IMR-90 (cell line): ENCODE measurements at regions of chr9 and their contacts with region 1.

Region 1: DNA sequence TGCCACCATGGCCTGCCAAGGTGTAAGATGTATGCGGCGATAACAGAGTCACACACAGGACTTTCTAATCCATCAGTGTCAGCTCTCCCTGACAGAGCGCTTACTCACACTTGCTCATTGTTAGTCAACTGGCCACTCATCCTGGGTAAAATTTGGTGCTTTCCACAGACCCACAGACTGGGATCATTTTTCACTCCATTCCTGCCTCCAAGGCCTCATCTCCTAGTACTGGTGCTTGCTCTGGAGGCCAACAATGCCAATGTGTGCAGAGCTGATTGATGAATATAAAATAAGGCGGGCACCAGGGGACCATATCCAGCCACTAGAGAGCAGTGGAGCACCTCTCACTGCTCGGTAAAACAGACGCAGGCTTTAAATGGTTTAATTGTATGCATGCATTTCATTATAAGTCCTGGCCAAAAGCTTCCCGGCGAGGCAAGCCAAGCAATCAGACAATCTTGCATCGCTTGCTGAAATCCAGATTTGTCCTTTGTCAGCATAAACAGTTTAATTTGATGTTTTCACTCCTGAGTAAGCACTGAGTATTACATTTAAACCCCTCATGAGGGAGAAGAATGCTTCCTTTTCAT is 22.3 kb downstream of the PSMB7 start:
- DNase-seq: peak; percentile 95
- ATAC-seq: peak; percentile 76
- H3K4me3 ChIP-seq: no peak overlapping the region
- H3K27ac ChIP-seq: no peak overlapping the region; the same call in 1 of the 2 replicates
- H3K4me1 ChIP-seq: peaks cover 38% of the 10 kb centered on the region
- H3K27me3 ChIP-seq: no peaks in the 10 kb centered on the region
- CTCF ChIP-seq: peak; percentile 68
- POLR2A ChIP-seq: no peak
- RAD21 ChIP-seq: peak; percentile 58

Region 2: DNA sequence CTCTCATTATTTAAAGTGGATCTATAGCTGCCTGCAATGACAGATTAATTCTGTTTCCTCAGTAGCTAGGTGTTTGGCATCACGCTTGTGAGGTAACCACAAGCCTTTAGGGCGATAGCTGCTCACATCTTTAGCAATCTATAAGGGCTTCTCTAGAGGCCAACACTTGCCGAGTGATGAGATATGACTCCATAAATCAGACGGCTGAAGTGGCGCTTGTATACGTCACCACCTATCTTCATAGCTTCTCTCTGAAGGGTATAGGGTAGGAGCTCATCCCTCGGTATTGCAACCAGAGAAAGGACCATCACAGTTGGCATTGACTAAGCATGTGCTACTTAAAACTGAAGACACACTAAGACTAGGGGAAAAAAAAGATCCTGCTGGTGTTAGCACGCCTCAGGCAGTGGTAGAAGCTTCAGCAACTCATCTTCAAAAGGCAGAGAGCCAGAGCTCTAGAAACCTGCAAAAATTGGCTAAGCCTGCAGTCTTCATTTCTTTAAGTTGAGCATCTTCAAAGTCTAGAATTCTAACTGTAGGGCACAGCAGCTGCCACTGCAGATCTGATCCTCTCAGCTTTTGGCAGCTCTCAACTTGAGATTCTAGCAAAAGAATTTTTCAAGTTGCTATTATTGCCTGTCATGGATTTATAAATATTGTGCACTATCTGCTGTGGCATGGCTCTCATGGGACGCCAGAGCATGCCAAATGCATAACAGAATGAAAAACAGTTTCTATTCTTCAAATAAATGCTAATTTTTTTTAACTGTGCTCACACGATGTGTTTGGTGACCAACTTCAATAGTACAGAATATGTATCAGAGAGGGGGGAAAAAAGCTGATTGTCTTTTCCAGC is 15.2 kb before region 1 on chr9:
- CTCF ChIA-PET with region 1: interaction called, 11 read pairs
- POLR2A ChIA-PET with region 1: no interaction called
- dilution Hi-C with region 1: no loop called
- in situ Hi-C with region 1: no loop called
- intact Hi-C with region 1: loop called (anchors 2 kb)
- DNase-seq: no peak
- ATAC-seq: peak; percentile 40
- H3K4me3 ChIP-seq: no peak overlapping the region
- H3K27ac ChIP-seq: no peak overlapping the region
- H3K4me1 ChIP-seq: peaks cover 8% of the 10 kb centered on the region
- H3K27me3 ChIP-seq: no peaks in the 10 kb centered on the region
- CTCF ChIP-seq: no peak
- POLR2A ChIP-seq: no peak
- RAD21 ChIP-seq: no peak